Right cardiac atrium (tissue), 5 donors: ENCODE measurements at regions of chr3 and their contacts with region 1.

Region 1: DNA sequence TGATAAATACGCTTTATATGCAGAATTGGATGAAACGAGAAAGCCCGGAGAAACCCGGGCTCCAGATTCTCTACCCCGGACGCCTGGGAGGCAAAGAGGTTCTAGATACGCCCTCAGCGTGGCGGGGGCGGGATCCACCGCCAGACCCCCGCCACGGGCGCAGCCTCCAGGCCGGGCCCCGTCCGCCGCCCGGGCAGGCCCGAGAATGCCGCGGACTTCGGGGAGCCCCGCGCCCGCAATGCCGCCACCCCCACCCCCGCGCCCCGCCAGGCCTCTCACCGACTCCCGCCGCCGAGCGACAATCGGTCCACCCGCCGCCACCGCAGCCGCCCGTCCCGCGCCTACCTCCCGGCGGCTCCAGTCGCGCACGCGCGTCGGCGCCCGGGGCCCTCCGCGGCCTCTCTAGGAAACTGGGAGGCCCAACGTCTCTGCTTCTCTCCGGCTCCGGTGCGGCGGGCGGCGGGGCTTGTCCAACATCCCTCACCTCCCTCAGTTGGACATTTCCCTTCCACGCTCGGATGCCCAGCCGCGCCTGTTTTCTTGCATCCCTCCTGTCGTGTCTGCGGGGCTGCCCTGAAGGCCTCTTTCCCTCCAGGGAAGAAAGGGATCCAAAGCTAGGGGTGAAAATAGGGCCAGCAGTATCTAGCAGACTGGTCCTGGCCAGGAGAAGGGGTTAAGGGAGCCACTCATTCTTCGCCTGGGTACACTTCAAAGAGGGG is at the start of gene ZNF445:
- DNase-seq: peak; percentile 84 to 93 (median 93)
- ATAC-seq: peak; percentile 98
- H3K4me3 ChIP-seq: peak within 1 kb of the TSS; percentile 99
- H3K27ac ChIP-seq: no peak within 1 kb of the TSS
- H3K4me1 ChIP-seq: no peaks in the 10 kb centered on the region
- H3K27me3 ChIP-seq: no peaks in the 10 kb centered on the region
- total RNA-seq, gene ZNF445: 14.2 to 15.6 (median 14.9) TPM

Region 2: GRCh38 chr3:44323341-44323955 is 154.0 kb before region 1 on chr3:
- intact Hi-C with region 1: loop called in 1 of 4 experiments (anchors 10 kb)
- DNase-seq: peak; percentile 62 to 80 (median 69)
- ATAC-seq: peak in 1 of 2 donors; percentile 44
- H3K4me3 ChIP-seq: no peak overlapping the region
- H3K27ac ChIP-seq: no peak overlapping the region
- H3K4me1 ChIP-seq: no peaks in the 10 kb centered on the region
- H3K27me3 ChIP-seq: no peaks in the 10 kb centered on the region

Region 3: DNA sequence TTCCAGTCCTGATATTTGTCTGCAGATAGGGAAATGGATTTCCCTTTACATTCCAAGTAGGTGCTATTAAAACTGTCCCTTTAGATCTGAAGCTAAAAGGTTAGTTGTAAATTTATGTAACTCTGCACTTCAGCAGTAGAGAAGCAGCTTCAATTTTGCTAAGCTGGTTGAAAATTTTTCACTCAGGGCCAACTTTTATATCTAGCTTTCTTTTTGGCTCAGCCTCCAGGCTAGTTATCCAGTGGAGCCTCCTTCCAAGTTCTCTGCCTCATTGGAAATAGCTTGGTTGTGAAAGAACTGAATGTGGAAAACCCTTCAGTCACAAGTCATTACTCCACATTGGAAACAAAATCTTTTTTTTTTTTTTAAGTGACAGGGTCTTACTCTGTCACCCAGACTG is 99.1 kb after region 1 on chr3:
- intact Hi-C with region 1: no loop called
- DNase-seq: no peak
- ATAC-seq: peak; percentile 63 to 74
- H3K4me3 ChIP-seq: no peak overlapping the region
- H3K27ac ChIP-seq: no peak overlapping the region
- H3K4me1 ChIP-seq: no peaks in the 10 kb centered on the region
- H3K27me3 ChIP-seq: no peaks in the 10 kb centered on the region